Activated B cell treated with CpG ODN at 0.5 μM for 24 hours (primary cell): ENCODE measurements at regions of chr1 and their contacts with region 1.

Region 1: DNA sequence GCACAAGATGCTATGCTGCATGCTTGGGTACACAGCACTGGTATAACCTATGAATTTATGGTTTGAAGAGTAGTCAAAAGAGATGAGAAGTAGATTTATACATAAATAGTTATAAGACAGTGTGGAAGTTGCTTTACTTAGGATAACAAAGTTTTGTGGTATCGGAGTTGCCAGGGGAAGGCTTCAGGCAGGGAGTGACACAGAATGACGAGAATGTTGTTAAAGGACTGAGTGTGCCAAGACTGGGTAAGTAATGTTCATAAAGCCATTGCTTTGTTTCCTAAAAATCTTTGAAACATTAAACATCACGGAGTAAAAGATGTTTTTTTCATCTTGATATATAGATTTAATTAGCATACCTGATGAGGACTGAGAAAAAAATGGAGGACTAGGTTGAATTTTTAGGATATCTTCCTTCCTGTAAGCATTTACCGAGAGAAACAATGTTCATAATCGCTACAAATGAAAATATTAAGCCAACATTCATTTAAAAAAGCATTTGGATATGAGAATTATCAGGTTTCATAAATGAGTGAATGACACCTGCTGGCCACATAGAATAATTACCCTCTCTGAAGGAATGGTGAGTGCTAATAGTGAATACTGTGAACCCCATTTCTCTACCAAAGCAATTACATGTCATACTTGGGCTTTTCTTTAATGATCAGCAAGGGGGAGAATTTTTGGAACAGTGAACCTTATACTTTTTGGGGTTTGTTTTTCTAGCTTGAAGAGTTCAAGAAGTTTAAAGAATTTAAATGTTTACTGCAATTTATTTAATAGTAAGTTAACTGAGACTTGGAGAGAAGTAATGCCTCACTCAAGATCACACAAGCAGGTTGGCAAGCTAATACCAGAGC is 28.4 kb downstream of the EXTL2 start:
- DNase-seq: no peak
- ATAC-seq: no peak
- H3K4me3 Mint-ChIP-seq: no peak overlapping the region
- H3K27ac Mint-ChIP-seq: no peak overlapping the region
- H3K4me1 Mint-ChIP-seq: no peaks in the 10 kb centered on the region
- H3K27me3 Mint-ChIP-seq: no peaks in the 10 kb centered on the region
- CTCF ChIP-seq: no peak

Region 2: GRCh38 chr1:99180343-99180808 is 1685.9 kb before region 1 on chr1:
- CTCF ChIA-PET with region 1: interaction called, 5 read pairs
- POLR2A ChIA-PET with region 1: no interaction called
- intact Hi-C with region 1: loop called (anchors 1 kb)
- DNase-seq: no peak
- ATAC-seq: peak; percentile 81
- H3K4me3 Mint-ChIP-seq: no peak overlapping the region
- H3K27ac Mint-ChIP-seq: no peak overlapping the region
- H3K4me1 Mint-ChIP-seq: no peaks in the 10 kb centered on the region
- H3K27me3 Mint-ChIP-seq: no peaks in the 10 kb centered on the region
- CTCF ChIP-seq: no peak

Region 3: DNA sequence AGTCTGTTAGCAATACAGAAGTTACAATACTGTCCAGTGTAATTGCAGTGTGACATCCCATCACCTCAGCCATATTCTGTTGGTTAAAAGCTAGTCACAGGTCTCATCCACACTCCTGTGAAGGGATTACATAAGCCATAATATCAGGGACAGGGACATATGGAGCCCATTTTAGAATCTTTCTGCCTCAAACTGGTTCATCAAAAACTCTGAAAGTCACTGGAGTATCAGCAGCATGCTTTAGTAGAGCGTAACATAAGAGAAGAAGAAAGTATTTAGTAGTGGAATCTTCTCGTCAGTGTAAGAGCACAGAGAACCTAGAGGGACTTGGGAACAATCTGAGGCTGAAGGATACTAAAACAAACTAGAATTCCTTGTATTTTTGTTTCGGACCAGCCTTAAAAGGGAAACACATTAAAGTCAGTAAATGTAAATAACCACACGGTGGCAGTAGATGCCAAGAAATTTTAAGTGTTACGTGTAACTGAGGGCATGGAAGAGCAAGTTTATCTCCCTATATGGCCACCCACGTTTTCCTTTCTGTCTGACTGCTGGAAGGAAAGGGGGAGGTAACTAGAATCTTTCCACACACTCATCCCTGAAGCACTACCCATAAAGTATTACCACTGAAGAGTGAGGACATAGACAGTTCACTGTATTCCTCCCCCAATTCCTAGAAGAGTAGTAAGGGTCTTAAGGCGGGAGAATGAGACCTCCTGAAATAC is 1057.7 kb before region 1 on chr1:
- CTCF ChIA-PET with region 1: interaction called, 19 read pairs
- POLR2A ChIA-PET with region 1: no interaction called
- intact Hi-C with region 1: loop called (anchors 1 kb)
- DNase-seq: no peak
- ATAC-seq: peak; percentile 71
- H3K4me3 Mint-ChIP-seq: no peak overlapping the region
- H3K27ac Mint-ChIP-seq: no peak overlapping the region
- H3K4me1 Mint-ChIP-seq: peaks cover 4% of the 10 kb centered on the region
- H3K27me3 Mint-ChIP-seq: peaks cover 10% of the 10 kb centered on the region
- CTCF ChIP-seq: peak; percentile 52

Region 4: GRCh38 chr1:100277866-100278265 is 588.4 kb before region 1 on chr1:
- CTCF ChIA-PET with region 1: no interaction called
- POLR2A ChIA-PET with region 1: no interaction called
- intact Hi-C with region 1: loop called (anchors 5 kb)
- DNase-seq: no peak
- ATAC-seq: peak; percentile 49
- H3K4me3 Mint-ChIP-seq: no peak overlapping the region
- H3K27ac Mint-ChIP-seq: no peak overlapping the region
- H3K4me1 Mint-ChIP-seq: peaks cover 2% of the 10 kb centered on the region
- H3K27me3 Mint-ChIP-seq: no peaks in the 10 kb centered on the region
- CTCF ChIP-seq: no peak

Region 5: GRCh38 chr1:100879422-100879821 is 13.2 kb after region 1 on chr1:
- CTCF ChIA-PET with region 1: interaction called, 17 read pairs
- POLR2A ChIA-PET with region 1: no interaction called
- intact Hi-C with region 1: no loop called
- DNase-seq: no peak
- ATAC-seq: no peak
- H3K4me3 Mint-ChIP-seq: no peak overlapping the region
- H3K27ac Mint-ChIP-seq: no peak overlapping the region
- H3K4me1 Mint-ChIP-seq: no peaks in the 10 kb centered on the region
- H3K27me3 Mint-ChIP-seq: no peaks in the 10 kb centered on the region
- CTCF ChIP-seq: no peak